Panc1 (cell line): ENCODE measurements at regions of chr12 and their contacts with region 1.

Region 1: DNA sequence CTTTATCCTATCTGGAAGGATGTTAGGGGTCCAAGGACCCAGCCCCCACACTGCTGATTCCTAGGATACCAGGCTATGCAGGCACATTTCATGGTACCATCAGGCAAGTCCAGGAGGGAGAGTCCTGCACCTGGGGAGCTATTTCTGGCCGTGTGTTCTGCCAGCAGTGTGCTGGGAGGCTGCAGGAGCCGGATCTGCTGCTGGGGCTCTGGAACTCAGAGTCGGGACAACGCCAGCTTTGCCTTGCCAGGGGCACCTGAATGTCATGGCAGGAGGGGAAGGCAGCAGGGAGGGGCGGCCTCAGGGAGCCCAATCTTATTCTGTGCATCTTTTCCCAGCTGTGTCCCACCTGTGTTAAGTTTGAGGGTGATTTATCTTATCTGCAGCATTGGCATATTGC is 17.8 kb downstream of the SRRM4 start:
- DNase-seq: no peak
- ATAC-seq: no peak
- H3K4me3 ChIP-seq: no peak overlapping the region
- H3K27ac ChIP-seq: no peak overlapping the region
- H3K4me1 ChIP-seq: no peaks in the 10 kb centered on the region; the same call in 1 of the 2 replicates
- H3K27me3 ChIP-seq: peaks cover under 1% of the 10 kb centered on the region; the same call in 1 of the 2 replicates
- CTCF ChIP-seq: no peak

Region 2: GRCh38 chr12:118946256-118946655 is 52.9 kb before region 1 on chr12:
- CTCF ChIA-PET with region 1: no interaction called
- POLR2A ChIA-PET with region 1: interaction called, 10 read pairs
- in situ Hi-C with region 1: no loop called
- intact Hi-C with region 1: no loop called
- DNase-seq: no peak
- ATAC-seq: no peak
- H3K4me3 ChIP-seq: no peak overlapping the region
- H3K27ac ChIP-seq: no peak overlapping the region
- H3K4me1 ChIP-seq: no peaks in the 10 kb centered on the region
- H3K27me3 ChIP-seq: peaks cover 9% of the 10 kb centered on the region
- CTCF ChIP-seq: no peak